Posterior cingulate gyrus (tissue), 11 donors: ENCODE measurements at regions of chr7 and their contacts with region 1.

Region 1: GRCh38 chr7:95527033-95527775 is 41.5 kb downstream of the ASB4 start:
- DNase-seq: peak in 8 of 10 donors; percentile 27 to 92 (median 60)

Region 2: GRCh38 chr7:95511716-95512260 is 15.4 kb before region 1 on chr7:
- intact Hi-C with region 1: loop called (anchors 1 kb)
- DNase-seq: peak in 9 of 10 donors; percentile 32 to 89 (median 74)

Region 3: GRCh38 chr7:95608359-95609173 is 81.4 kb after region 1 on chr7:
- intact Hi-C with region 1: no loop called
- DNase-seq: peak; percentile 34 to 93 (median 60)